Right ventricle myocardium superior (tissue), 1 donor: ENCODE measurements at regions of chr9 and their contacts with region 1.

Region 1: GRCh38 chr9:126398403-126399058 is 71.9 kb downstream of the MVB12B start:
- DNase-seq: peak; percentile 90
- ATAC-seq: peak; percentile 95

Region 2: GRCh38 chr9:126301985-126302603 is 96.4 kb before region 1 on chr9:
- intact Hi-C with region 1: loop called (anchors 5 kb)
- DNase-seq: no peak
- ATAC-seq: peak; percentile 89

Region 3: DNA sequence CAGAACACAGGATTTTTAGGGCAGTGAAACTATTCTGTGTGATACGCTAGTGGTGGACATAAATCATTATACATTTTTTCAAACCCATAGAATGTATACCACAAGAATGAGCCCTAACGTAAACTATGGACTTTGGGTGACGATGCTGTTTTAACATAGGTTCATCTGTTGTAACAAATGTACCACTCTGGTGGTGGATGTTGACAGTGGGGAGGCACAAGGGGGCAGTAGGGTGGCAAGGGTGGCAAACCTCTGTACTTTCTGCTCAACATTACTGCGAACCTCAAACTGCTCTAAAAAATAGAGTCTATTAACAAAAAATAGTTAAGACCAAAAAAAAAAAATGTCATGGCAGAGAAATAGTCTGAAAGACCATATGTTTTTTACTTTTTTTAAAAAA is 81.0 kb before region 1 on chr9:
- intact Hi-C with region 1: loop called (anchors 5 kb)
- DNase-seq: no peak
- ATAC-seq: peak; percentile 71